ENCODE measurements at regions of chrX and their contacts with region 1.

Region 1: GRCh38 chrX:109732780-109733657 is at the start of gene ACSL4:
- DNase-seq: peak; percentile 95
- H3K4me3 Mint-ChIP-seq: peak within 1 kb of the TSS; percentile 99
- H3K27ac Mint-ChIP-seq: peak within 1 kb of the TSS; percentile 99
- H3K4me1 Mint-ChIP-seq: peaks cover 21% of the 10 kb centered on the region
- H3K27me3 Mint-ChIP-seq: no peaks in the 10 kb centered on the region
- total RNA-seq, gene ACSL4: 75.9 and 87.5 TPM in 2 replicates

Region 2: GRCh38 chrX:109685656-109686078 is 47.4 kb before region 1 on chrX:
- intact Hi-C with region 1: loop called (anchors 5 kb)
- DNase-seq: no peak
- H3K4me3 Mint-ChIP-seq: no peak overlapping the region
- H3K27ac Mint-ChIP-seq: peak overlapping the region; percentile 60
- H3K4me1 Mint-ChIP-seq: peaks cover 18% of the 10 kb centered on the region
- H3K27me3 Mint-ChIP-seq: no peaks in the 10 kb centered on the region

Region 3: DNA sequence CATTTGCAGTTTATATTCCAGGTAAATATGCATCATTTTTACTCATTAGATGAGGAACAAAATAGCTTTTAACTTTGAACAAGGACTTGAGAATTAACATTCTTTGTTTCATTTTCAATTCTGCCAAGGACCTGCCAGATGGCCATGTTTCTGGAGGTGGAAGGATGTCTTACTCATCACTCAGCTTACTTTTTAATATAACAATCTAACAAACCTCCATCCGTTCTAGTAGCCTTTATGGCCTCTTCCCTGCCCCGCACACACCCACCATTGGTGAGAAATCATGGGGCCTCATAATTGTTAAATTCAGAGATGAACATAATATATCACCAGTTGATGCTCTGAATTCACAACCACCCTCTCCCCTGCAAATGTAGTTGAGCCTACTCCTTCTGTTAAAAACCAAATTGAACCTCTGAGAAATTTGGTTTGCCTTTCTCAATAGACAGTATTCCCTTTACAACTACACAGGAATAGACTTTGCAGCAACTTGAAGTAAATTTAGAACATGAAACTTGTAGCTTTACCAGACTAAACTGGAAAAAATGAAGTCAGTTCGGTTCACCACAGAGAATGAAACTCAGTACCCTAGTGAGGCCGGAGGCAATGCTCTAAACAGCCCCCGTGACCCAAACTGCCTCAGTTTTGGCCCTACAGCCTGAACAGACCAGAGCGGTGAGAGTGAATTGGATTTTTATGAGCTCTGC is 50.1 kb after region 1 on chrX:
- intact Hi-C with region 1: loop called (anchors 1 kb)
- DNase-seq: peak; percentile 52
- H3K4me3 Mint-ChIP-seq: peak overlapping the region; percentile 75
- H3K27ac Mint-ChIP-seq: peak overlapping the region; percentile 95
- H3K4me1 Mint-ChIP-seq: peaks cover 17% of the 10 kb centered on the region
- H3K27me3 Mint-ChIP-seq: no peaks in the 10 kb centered on the region

Region 4: GRCh38 chrX:109856974-109857373 is 124.0 kb after region 1 on chrX:
- intact Hi-C with region 1: loop called (anchors 5 kb)
- DNase-seq: peak; percentile 70
- H3K4me3 Mint-ChIP-seq: no peak overlapping the region
- H3K27ac Mint-ChIP-seq: no peak overlapping the region
- H3K4me1 Mint-ChIP-seq: peaks cover 6% of the 10 kb centered on the region
- H3K27me3 Mint-ChIP-seq: no peaks in the 10 kb centered on the region

Region 5: DNA sequence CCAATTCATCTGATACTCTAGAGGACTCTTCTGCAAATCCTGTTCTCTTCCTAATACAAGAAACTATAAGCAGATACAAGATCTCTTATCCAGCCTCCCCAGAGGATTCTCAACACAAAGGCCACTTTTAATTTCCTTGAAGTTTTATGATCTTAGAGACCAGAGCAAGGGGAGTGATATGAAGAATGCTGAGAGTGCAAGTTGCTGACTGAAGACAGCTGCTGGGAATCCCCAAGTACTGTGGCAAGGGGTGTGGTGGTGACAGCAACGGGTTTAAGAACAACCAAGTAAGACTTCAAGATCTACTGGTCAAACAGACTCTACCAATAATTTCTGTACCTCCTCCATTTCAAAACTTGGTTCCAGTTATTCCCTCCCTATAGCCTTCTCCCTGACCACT is 577.9 kb after region 1 on chrX:
- intact Hi-C with region 1: loop called (anchors 5 kb)
- DNase-seq: peak; percentile 75
- H3K4me3 Mint-ChIP-seq: peak overlapping the region; percentile 73
- H3K27ac Mint-ChIP-seq: peak overlapping the region; percentile 78
- H3K4me1 Mint-ChIP-seq: peaks cover 35% of the 10 kb centered on the region
- H3K27me3 Mint-ChIP-seq: no peaks in the 10 kb centered on the region